ENCODE measurements at regions of chr10 and their contacts with region 1.

Region 1: DNA sequence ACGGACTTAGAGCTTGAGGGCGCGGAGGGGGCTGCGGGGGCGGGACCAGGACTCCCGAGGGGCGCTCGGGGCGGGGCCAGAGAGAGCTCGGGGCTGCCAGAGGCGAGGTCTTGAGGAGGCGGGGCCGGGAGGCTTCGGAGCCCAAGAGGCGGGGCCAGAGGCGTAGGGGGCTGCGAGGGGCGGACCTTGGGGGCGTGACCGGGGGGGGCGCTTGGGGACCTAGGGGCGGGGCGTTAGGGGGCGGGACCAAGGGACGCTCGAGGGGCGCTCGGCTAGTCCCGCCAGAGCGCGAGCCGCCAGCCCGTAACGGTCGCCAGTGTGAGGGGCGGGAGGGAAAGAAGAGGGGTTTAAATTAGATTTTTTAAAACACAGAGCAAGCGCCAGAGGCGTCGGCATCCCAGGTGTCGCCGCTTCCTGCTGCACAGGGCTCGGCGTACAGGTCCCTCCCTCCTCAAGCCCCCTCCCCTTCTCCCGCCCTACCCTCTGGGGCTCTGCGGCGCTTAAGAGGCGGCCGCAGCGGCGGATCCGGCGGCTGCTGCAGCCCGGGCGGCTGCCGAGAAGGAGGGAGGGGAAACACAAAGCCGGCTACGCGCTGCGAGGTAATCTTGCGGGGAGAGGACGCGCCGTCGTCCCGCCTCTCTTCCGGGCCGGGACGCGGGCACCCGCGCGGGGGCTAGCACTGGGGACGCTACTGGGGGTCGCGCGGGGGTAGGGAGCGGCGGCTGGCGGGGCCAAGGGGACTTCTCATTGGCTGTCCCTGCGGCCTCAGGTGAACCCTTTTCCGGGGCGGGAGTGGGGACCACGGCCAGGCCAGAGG is at the start of gene ADD3:
- DNase-seq: peak; percentile 97 to 99 (median 99)
- ATAC-seq: peak; percentile 95
- H3K4me3 ChIP-seq: peak within 1 kb of the TSS; percentile 98
- H3K27ac ChIP-seq: peak within 1 kb of the TSS; percentile 92
- H3K4me1 ChIP-seq: peaks cover 2% of the 10 kb centered on the region
- H3K27me3 ChIP-seq: no peaks in the 10 kb centered on the region
- total RNA-seq, gene ADD3: 113 to 146 (median 124) TPM

Region 2: GRCh38 chr10:109894516-109894915 is 113.4 kb before region 1 on chr10:
- intact Hi-C with region 1: loop called (anchors 10 kb)
- DNase-seq: peak; percentile 85 to 92 (median 89)
- ATAC-seq: peak; percentile 75 to 86
- H3K4me3 ChIP-seq: no peak overlapping the region
- H3K27ac ChIP-seq: peak overlapping the region; percentile 95
- H3K4me1 ChIP-seq: peaks cover 49% of the 10 kb centered on the region
- H3K27me3 ChIP-seq: no peaks in the 10 kb centered on the region

Region 3: DNA sequence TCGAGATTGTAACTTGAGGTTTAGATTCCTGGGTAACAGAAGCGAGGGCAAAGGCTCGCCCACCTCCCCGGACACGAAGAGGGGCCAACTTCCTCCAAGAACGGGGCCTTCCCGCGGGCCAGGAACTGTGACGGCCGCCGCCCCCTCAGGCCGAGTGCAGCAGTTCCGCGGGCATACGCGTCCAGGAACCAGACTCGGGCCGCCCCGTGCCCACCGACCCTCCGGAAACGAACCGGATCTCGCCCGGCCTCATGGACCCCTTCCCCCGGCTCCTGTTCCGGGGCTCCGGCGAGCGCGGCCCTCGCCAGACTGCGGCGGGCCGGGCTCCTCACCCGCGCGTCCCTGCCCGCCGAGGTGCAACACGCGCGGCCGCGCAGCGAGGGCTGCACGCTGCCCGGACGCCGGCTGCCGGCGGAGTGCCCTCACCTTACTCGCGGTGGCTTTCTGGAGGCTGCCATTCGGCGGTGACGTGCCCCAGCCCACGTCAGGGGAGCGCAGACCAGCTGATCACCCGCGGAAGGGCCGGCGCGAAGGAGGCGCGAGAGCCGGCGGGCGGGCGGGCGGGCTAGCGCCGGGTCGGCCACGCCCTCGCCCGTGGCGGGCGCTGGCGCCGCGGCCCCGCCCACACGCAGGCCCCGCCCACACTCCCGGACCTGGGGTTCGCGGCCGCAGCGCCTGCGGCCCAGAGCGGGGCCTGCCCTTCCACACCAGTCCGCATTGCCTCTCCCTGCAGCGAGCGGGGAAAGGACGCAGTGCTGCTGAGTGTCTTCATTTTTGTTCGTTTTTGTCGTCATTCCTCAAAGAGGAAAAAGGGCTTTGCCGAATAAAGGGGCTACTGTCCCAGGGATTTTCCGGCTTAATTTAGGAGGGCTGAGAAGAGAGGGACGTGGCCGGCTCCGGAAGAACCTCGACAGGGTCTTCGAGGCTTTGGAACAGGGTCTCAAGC is 84.7 kb before region 1 on chr10 and contains the start of gene XPNPEP1:
- intact Hi-C with region 1: loop called in 1 of 4 experiments (anchors 10 kb)
- DNase-seq: peak; percentile 92 to 96 (median 96)
- ATAC-seq: peak; percentile 97 to 98
- H3K4me3 ChIP-seq: peak within 1 kb of the TSS; percentile 73
- H3K27ac ChIP-seq: peak within 1 kb of the TSS; percentile 71
- H3K4me1 ChIP-seq: peaks cover 7% of the 10 kb centered on the region
- H3K27me3 ChIP-seq: no peaks in the 10 kb centered on the region
- total RNA-seq, gene XPNPEP1: 36.9 to 47.4 (median 39.1) TPM

Region 4: GRCh38 chr10:110067960-110068770 is 60.3 kb after region 1 on chr10:
- intact Hi-C with region 1: loop called in 3 of 4 experiments (anchors 5 to 10 kb)
- DNase-seq: peak; percentile 57 to 78 (median 61)
- ATAC-seq: peak; percentile 94 to 98
- H3K4me3 ChIP-seq: no peak overlapping the region
- H3K27ac ChIP-seq: peak overlapping the region; percentile 92
- H3K4me1 ChIP-seq: peaks cover 6% of the 10 kb centered on the region
- H3K27me3 ChIP-seq: no peaks in the 10 kb centered on the region

Region 5: DNA sequence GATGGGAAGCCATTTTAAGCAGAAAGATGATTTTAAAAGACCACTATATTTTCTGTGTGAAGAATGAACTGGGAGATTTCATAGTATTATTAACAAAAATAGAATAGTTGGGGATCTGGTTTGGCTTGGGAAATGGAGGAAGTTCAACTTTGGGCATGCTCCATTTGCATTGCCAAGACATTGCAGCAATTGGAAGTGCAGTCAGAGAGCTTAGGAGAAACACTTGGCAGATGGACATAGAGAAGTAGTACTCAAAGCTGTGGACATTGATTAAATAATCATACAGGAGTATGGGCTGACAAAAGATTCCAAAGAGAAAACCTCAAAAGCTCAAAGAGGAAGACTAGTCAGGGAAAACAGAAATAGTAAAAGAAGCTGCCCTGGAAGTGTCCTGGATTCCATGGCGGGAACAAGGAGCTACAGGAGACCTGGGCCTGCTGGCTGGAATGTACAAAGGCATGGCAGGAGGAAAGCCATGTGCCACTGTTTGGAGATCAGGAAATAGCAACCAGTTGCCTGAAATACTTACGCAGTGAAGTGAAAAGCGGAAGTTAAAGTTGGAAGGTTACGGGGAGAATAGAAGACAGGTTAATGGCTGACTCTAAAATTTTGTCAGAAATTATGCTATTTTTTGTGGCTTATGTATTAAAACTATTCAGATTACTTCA is 105.9 kb after region 1 on chr10:
- intact Hi-C with region 1: no loop called
- DNase-seq: no peak
- ATAC-seq: peak in 1 of 2 donors; percentile 44
- H3K4me3 ChIP-seq: no peak overlapping the region
- H3K27ac ChIP-seq: peak overlapping the region; percentile 62
- H3K4me1 ChIP-seq: peaks cover 2% of the 10 kb centered on the region
- H3K27me3 ChIP-seq: no peaks in the 10 kb centered on the region

Measured in right cardiac atrium (tissue), 5 donors.